Activated CD4-positive, alpha-beta memory T cell treated with anti-CD3 and anti-CD28 coated beads for 36 hours (primary cell): ENCODE measurements at regions of chr16 and their contacts with region 1.

Region 1: GRCh38 chr16:30429678-30430427 is at the start of gene DCTPP1:
- DNase-seq: peak; percentile 97
- H3K4me3 Mint-ChIP-seq: no peak within 1 kb of the TSS
- H3K27ac Mint-ChIP-seq: no peak within 1 kb of the TSS
- H3K4me1 Mint-ChIP-seq: peaks cover 35% of the 10 kb centered on the region
- H3K27me3 Mint-ChIP-seq: no peaks in the 10 kb centered on the region
- total RNA-seq, gene DCTPP1: 87.5 to 96.6 TPM

Region 2: GRCh38 chr16:30407102-30407803 is 22.6 kb before region 1 on chr16 and contains the start of gene ZNF771:
- CTCF ChIA-PET with region 1: interaction called, 14 read pairs
- POLR2A ChIA-PET with region 1: interaction called, 4 read pairs
- intact Hi-C with region 1: no loop called
- DNase-seq: peak; percentile 94
- H3K4me3 Mint-ChIP-seq: peak within 1 kb of the TSS; percentile 95
- H3K27ac Mint-ChIP-seq: peak within 1 kb of the TSS; percentile 91
- H3K4me1 Mint-ChIP-seq: peaks cover 25% of the 10 kb centered on the region
- H3K27me3 Mint-ChIP-seq: no peaks in the 10 kb centered on the region
- total RNA-seq, gene ZNF771: 5.4 to 5.7 TPM

Region 3: DNA sequence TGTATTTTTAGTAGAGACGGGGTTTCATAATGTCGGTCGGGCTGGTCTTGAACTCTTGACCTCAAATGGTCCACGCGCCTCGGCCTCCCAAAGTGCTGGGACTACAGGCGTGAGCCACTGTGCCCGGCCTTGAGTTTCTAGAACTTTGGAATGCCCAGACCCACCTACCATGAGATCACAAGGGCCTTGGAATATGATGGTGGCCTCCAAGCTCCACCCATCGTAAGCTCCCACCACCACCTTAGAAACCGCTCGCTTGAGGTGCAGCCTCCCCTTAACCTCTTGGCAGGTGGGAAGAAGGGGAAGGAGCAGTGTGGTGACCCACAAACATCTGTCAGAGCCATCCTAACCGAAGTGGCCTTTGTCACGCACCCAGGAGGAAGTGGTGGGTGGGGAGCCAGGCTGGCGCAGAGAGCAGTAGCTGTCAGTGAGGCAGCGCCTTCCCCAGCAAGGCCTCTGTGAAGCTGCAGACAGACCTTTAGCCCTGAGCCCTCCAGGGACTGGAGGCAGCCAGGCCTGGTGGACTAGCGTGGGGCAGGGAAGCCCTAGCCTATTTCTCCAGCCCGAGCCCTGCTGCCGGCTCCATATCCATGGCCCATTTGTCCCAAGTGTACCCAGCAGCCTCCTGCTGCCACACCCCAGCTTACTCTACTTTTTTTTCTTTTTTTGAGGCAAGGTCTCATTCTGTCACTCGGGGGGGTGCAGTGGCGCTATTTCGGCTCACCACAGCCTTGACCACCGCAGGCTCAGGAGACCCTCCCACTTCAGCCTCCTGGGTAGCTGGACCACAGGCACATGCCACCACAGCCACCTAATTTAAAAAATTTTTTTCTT is 28.9 kb after region 1 on chr16:
- CTCF ChIA-PET with region 1: interaction called, 45 read pairs
- POLR2A ChIA-PET with region 1: interaction called, 8 read pairs
- intact Hi-C with region 1: no loop called
- DNase-seq: peak; percentile 97
- H3K4me3 Mint-ChIP-seq: peak overlapping the region; percentile 63
- H3K27ac Mint-ChIP-seq: peak overlapping the region; percentile 96
- H3K4me1 Mint-ChIP-seq: peaks cover 43% of the 10 kb centered on the region
- H3K27me3 Mint-ChIP-seq: no peaks in the 10 kb centered on the region

Region 4: GRCh38 chr16:30526823-30527635 is 97.2 kb after region 1 on chr16:
- CTCF ChIA-PET with region 1: interaction called, 10 read pairs
- POLR2A ChIA-PET with region 1: interaction called, 3 read pairs
- intact Hi-C with region 1: no loop called
- DNase-seq: peak; percentile 98
- H3K4me3 Mint-ChIP-seq: peak overlapping the region; percentile 73
- H3K27ac Mint-ChIP-seq: peak overlapping the region; percentile 86
- H3K4me1 Mint-ChIP-seq: peaks cover 38% of the 10 kb centered on the region
- H3K27me3 Mint-ChIP-seq: no peaks in the 10 kb centered on the region

Region 5: DNA sequence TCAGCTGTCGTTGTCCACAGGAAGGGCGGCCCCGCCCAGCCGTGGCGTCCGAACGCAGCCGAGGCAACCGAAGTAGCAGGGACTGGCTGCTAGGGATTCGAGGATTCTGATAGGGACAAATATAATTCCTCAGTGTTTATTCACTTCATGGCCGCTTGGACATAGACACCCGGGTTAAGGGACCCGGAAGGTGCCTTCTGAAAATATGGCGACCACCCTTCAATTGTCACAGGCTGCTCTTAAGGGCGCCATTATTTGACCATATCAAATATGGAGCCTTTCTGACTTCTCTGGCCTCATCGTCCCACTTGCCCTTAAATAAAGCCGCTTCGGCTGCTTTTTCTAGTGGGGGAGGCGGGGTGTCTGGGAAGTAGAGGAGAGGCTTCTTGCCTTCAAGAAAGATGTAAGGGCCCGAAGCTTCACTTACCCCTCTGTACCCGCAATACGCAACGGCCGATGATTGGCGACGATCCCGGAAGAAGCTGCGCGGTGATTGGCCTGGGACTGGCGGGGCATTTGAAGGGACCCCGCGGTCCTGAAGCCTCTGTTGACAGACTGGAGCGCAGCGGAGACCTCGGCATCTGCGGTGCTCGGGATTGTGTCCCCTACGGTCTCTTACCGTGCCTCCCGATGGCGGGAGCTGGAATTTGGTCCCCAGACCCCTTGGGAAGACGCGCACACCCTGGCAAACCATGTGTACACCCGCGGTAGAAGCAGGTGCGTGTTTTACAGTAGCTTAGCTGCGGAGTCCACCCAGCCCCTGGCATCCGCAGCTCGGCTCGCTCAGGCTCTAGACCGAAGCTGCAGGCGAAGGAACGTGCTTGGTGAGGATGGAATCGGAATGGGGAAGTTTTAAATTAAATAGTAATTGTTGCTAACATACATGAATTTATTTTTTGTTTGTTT is 142.1 kb after region 1 on chr16 and contains the start of gene ZNF688:
- CTCF ChIA-PET with region 1: interaction called, 13 read pairs
- POLR2A ChIA-PET with region 1: no interaction called
- intact Hi-C with region 1: no loop called
- DNase-seq: peak; percentile 96
- H3K4me3 Mint-ChIP-seq: peak within 1 kb of the TSS; percentile 91
- H3K27ac Mint-ChIP-seq: peak within 1 kb of the TSS; percentile 92
- H3K4me1 Mint-ChIP-seq: peaks cover 48% of the 10 kb centered on the region
- H3K27me3 Mint-ChIP-seq: no peaks in the 10 kb centered on the region
- total RNA-seq, gene ZNF688: 9.2 to 9.3 TPM

Region 6: DNA sequence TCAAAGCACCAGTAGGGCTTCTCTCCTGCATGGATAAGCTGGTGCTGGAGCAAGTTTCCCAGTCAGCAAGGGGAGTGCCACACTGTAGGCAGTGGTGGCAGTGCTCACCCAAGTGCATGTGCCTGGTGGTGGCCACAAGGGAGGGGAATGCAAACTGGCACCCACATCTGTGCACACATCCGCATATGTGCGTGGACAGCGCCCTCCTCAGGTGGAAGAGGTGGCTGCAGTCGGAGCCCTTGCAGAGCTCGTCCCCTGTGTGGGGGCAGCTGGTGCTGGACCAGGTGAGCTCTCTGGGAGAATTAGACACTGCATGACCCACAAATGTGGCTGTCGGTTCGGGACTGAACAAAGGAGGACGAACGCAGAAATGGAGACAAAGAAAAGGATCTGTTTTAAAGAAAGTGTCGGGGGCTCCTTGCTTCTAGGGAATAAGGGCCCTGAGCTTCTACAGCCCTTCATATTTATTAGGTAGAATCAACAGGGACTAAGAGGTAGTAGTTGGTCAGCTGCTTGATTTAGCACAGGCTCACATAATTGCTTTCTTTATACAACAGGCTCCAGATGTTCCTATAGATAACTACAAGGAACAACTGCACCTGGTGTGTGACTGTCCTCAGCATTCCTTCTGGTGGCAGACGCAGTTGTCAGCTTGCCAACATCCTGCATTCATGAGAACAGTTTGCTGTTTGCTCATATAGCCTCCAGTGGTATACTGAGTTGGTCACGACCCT is 185.7 kb after region 1 on chr16:
- CTCF ChIA-PET with region 1: interaction called, 13 read pairs
- POLR2A ChIA-PET with region 1: interaction called, 9 read pairs
- intact Hi-C with region 1: loop called (anchors 5 kb)
- DNase-seq: peak; percentile 91
- H3K4me3 Mint-ChIP-seq: no peak overlapping the region
- H3K27ac Mint-ChIP-seq: no peak overlapping the region
- H3K4me1 Mint-ChIP-seq: peaks cover 1% of the 10 kb centered on the region
- H3K27me3 Mint-ChIP-seq: no peaks in the 10 kb centered on the region